ENCODE measurements at regions of chr3 and their contacts with region 1.

Region 1: GRCh38 chr3:7800006-7800780 is 701.4 kb upstream of the LMCD1 start:
- DNase-seq: peak in 2 of 9 experiments; percentile 7 to 14
- ATAC-seq: no peak
- H3K4me3 ChIP-seq: no peak overlapping the region
- H3K4me3 Mint-ChIP-seq: no peak overlapping the region
- H3K27ac ChIP-seq: no peak overlapping the region
- H3K27ac Mint-ChIP-seq: no peak overlapping the region
- H3K4me1 ChIP-seq: no peaks in the 10 kb centered on the region
- H3K4me1 Mint-ChIP-seq: no peaks in the 10 kb centered on the region
- H3K27me3 ChIP-seq: no peaks in the 10 kb centered on the region
- H3K27me3 Mint-ChIP-seq: no peaks in the 10 kb centered on the region
- CTCF ChIP-seq: peak; percentile 23

Region 2: DNA sequence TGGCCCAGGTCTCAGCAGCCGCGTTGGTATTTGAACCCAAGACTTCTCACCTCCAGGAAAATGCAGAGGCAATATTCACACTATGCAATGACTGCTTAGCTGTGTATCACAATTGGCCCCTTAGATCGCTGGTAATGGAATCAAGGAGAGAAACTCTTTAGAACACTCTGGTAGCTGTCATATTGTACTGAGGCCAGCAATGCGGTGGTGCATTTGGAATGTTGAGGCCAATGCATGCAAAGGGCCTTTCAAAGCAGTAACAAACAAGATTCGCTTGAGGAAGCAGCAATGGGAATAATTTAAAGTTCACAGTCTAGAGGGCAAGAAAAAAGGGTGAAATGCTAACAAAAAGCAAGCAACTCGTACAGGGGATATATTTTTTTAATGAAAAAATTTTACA is 175.2 kb before region 1 on chr3:
- CTCF ChIA-PET with region 1: no interaction called
- POLR2A ChIA-PET with region 1: no interaction called
- intact Hi-C with region 1: no loop called
- DNase-seq: no peak
- ATAC-seq: no peak
- H3K4me3 ChIP-seq: no peak overlapping the region
- H3K4me3 Mint-ChIP-seq: no peak overlapping the region
- H3K27ac ChIP-seq: no peak overlapping the region
- H3K27ac Mint-ChIP-seq: no peak overlapping the region
- H3K4me1 ChIP-seq: no peaks in the 10 kb centered on the region
- H3K4me1 Mint-ChIP-seq: no peaks in the 10 kb centered on the region
- H3K27me3 ChIP-seq: no peaks in the 10 kb centered on the region
- H3K27me3 Mint-ChIP-seq: no peaks in the 10 kb centered on the region
- CTCF ChIP-seq: no peak

Region 3: GRCh38 chr3:7707187-7707586 is 93.0 kb before region 1 on chr3:
- CTCF ChIA-PET with region 1: no interaction called
- POLR2A ChIA-PET with region 1: no interaction called
- intact Hi-C with region 1: no loop called
- DNase-seq: no peak
- ATAC-seq: no peak
- H3K4me3 ChIP-seq: no peak overlapping the region
- H3K4me3 Mint-ChIP-seq: no peak overlapping the region
- H3K27ac ChIP-seq: no peak overlapping the region
- H3K27ac Mint-ChIP-seq: no peak overlapping the region
- H3K4me1 ChIP-seq: no peaks in the 10 kb centered on the region
- H3K4me1 Mint-ChIP-seq: no peaks in the 10 kb centered on the region
- H3K27me3 ChIP-seq: no peaks in the 10 kb centered on the region
- H3K27me3 Mint-ChIP-seq: no peaks in the 10 kb centered on the region
- CTCF ChIP-seq: no peak

Region 4: DNA sequence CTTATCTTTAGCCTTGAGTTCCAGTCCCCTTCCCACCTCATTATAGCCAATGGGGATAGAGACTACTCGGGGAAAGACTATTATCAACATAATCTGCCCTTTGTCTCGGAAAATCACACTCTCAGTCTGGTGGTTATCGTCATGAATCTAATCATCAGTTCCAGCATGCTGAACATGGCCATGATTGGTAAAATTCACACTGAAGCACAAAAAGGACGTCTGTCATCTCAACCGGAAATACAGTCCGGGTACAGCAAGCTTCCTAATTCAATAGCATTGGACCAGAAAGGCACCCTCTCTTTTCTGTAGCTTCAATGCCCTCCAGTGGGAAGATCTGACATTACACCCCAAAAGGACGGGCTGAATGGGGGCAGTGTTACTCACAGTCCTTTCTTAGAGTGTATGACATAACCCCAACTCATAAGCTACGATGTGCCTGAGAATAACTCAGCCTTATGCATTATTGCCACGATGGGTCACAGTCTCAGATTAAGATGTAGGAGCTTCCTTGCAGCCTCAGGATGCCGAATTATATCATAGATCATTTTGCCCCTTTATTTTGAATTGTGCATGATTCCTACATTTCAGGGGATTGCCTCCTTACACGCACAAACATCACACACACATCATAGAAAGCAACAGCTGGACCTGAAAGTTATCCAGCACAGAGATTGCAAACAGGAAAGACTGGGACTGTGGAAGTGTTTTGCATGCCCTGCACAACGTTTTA is 311.0 kb after region 1 on chr3:
- CTCF ChIA-PET with region 1: interaction called, 10 read pairs
- POLR2A ChIA-PET with region 1: no interaction called
- intact Hi-C with region 1: loop called (anchors 1 to 2 kb)
- DNase-seq: peak; percentile 2 to 58 (median 39)
- ATAC-seq: peak; percentile 67
- H3K4me3 ChIP-seq: no peak overlapping the region
- H3K4me3 Mint-ChIP-seq: peak overlapping the region; percentile 27
- H3K27ac ChIP-seq: no peak overlapping the region
- H3K27ac Mint-ChIP-seq: no peak overlapping the region
- H3K4me1 ChIP-seq: no peaks in the 10 kb centered on the region
- H3K4me1 Mint-ChIP-seq: no peaks in the 10 kb centered on the region
- H3K27me3 ChIP-seq: no peaks in the 10 kb centered on the region
- H3K27me3 Mint-ChIP-seq: peaks cover 14% of the 10 kb centered on the region
- CTCF ChIP-seq: peak; percentile 56